Caco-2 (cell line): ENCODE measurements at regions of chr9 and their contacts with region 1.

Region 1: GRCh38 chr9:83538172-83538889 is at the start of gene FRMD3:
- DNase-seq: peak; percentile 65 to 70
- H3K4me3 ChIP-seq: peak within 1 kb of the TSS; percentile 42
- H3K4me3 Mint-ChIP-seq: peak within 1 kb of the TSS; percentile 60
- H3K27ac Mint-ChIP-seq: no peak within 1 kb of the TSS
- H3K4me1 ChIP-seq: no peaks in the 10 kb centered on the region
- H3K4me1 Mint-ChIP-seq: no peaks in the 10 kb centered on the region
- H3K27me3 ChIP-seq: no peaks in the 10 kb centered on the region
- H3K27me3 Mint-ChIP-seq: peaks cover 10% of the 10 kb centered on the region
- CTCF ChIP-seq: peak; percentile 39 to 53
- total RNA-seq, gene FRMD3: 0.12 TPM in 1 of 2 replicates, not detected in the other

Region 2: DNA sequence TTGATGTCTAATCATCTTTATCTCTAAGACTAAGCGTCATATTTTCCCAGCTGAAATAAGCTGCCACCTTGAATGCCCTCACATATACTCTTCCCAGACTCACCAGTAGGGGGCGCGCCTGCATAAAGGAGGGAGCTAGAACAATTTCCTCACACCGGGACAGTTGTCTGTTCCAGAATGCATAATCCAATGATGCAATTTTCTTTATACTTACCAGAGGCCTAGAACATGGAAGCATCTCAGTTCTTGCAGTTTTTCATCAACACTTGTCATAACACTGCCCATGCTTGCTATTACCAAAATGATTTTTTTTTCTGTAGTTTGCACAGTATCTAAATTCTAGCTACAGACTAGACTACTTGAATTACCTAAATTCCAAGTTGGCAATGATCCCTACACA is 204.0 kb before region 1 on chr9:
- CTCF ChIA-PET with region 1: interaction called, 18 read pairs
- POLR2A ChIA-PET with region 1: no interaction called
- intact Hi-C with region 1: loop called (anchors 1 kb)
- DNase-seq: peak; percentile 58 to 59
- H3K4me3 ChIP-seq: no peak overlapping the region
- H3K4me3 Mint-ChIP-seq: no peak overlapping the region
- H3K27ac Mint-ChIP-seq: no peak overlapping the region
- H3K4me1 ChIP-seq: no peaks in the 10 kb centered on the region
- H3K4me1 Mint-ChIP-seq: no peaks in the 10 kb centered on the region
- H3K27me3 ChIP-seq: no peaks in the 10 kb centered on the region
- H3K27me3 Mint-ChIP-seq: no peaks in the 10 kb centered on the region
- CTCF ChIP-seq: peak; percentile 47 to 54

Region 3: DNA sequence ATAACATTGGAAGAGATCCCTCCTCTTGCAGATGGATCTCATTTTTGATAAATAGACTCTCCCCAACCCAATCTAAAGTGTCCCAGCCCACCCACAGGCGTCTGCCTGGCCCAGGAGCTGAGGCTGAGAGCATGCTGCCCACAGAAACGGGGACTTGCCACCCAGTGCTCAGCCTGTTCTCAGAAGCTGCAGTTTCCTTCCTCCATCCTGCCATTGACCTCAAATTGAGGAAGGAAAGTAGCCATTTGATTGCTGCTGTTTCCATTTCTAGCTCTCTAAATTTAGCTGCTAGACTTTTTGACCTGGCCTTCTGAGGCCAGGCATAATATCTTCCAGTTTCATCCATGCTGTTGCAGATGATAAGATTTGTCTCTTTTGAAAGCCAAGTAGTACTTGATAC is 31.0 kb after region 1 on chr9:
- CTCF ChIA-PET with region 1: no interaction called
- POLR2A ChIA-PET with region 1: no interaction called
- intact Hi-C with region 1: no loop called
- DNase-seq: no peak
- H3K4me3 ChIP-seq: no peak overlapping the region
- H3K4me3 Mint-ChIP-seq: no peak overlapping the region
- H3K27ac Mint-ChIP-seq: no peak overlapping the region
- H3K4me1 ChIP-seq: no peaks in the 10 kb centered on the region
- H3K4me1 Mint-ChIP-seq: no peaks in the 10 kb centered on the region
- H3K27me3 ChIP-seq: no peaks in the 10 kb centered on the region
- H3K27me3 Mint-ChIP-seq: no peaks in the 10 kb centered on the region
- CTCF ChIP-seq: no peak